Mammary epithelial cell (primary cell): ENCODE measurements at regions of chr6 and their contacts with region 1.

Region 1: GRCh38 chr6:133595111-133595761 is 293.7 kb upstream of the TCF21 start:
- DNase-seq: no peak
- H3K4me3 ChIP-seq: no peak overlapping the region
- H3K27ac ChIP-seq: no peak overlapping the region
- H3K4me1 ChIP-seq: peaks cover 18% of the 10 kb centered on the region
- H3K27me3 ChIP-seq: no peaks in the 10 kb centered on the region
- CTCF ChIP-seq: no peak

Region 2: GRCh38 chr6:133609404-133610270 is 14.4 kb after region 1 on chr6:
- CTCF ChIA-PET with region 1: no interaction called
- dilution Hi-C with region 1: no loop called
- in situ Hi-C with region 1: no loop called
- intact Hi-C with region 1: loop called (anchors 1 kb)
- DNase-seq: peak; percentile 97
- H3K4me3 ChIP-seq: no peak overlapping the region
- H3K27ac ChIP-seq: peak overlapping the region; percentile 81
- H3K4me1 ChIP-seq: peaks cover 15% of the 10 kb centered on the region
- H3K27me3 ChIP-seq: no peaks in the 10 kb centered on the region
- CTCF ChIP-seq: no peak

Region 3: GRCh38 chr6:133707456-133707855 is 112.2 kb after region 1 on chr6:
- CTCF ChIA-PET with region 1: no interaction called
- dilution Hi-C with region 1: no loop called
- in situ Hi-C with region 1: no loop called
- intact Hi-C with region 1: loop called (anchors 10 kb)
- DNase-seq: peak; percentile 74
- H3K4me3 ChIP-seq: no peak overlapping the region
- H3K27ac ChIP-seq: no peak overlapping the region
- H3K4me1 ChIP-seq: peaks cover 24% of the 10 kb centered on the region
- H3K27me3 ChIP-seq: no peaks in the 10 kb centered on the region
- CTCF ChIP-seq: no peak